ENCODE measurements at regions of chr2 and their contacts with region 1.

Region 1: DNA sequence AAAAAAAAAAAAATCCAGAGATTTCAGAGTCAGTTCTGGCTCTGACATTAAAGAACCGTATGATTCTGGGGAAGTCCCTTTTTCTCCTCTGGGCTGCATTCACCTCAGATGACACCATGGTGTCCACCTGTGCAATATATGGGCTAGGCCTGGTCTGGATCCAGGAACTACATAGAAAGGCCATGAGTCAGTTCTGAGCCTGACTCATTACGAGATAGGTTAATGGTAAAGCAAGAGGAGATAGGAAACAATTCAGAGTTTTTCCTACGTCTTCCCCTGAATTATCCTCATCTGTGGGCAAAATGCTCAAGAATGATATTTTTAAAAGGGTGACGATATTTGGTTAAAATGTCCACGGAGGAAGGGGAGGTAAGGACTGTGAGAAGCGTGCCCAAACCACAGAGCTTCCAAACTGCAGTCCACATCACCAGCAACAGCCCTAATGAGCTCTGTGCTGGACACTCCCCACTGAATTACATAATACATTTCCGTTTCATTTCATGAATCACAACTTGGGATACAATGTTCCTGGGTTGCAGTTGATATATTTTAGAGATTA is 180.1 kb upstream of the OSR1 start:
- DNase-seq: peak; percentile 99
- H3K4me3 ChIP-seq: peak overlapping the region in 2 of 3 experiments; percentile 19 to 38
- H3K27ac ChIP-seq: peak overlapping the region; percentile 97
- H3K4me1 ChIP-seq: peaks cover 64% of the 10 kb centered on the region
- H3K27me3 ChIP-seq: no peaks in the 10 kb centered on the region
- CTCF ChIP-seq: no peak

Region 2: DNA sequence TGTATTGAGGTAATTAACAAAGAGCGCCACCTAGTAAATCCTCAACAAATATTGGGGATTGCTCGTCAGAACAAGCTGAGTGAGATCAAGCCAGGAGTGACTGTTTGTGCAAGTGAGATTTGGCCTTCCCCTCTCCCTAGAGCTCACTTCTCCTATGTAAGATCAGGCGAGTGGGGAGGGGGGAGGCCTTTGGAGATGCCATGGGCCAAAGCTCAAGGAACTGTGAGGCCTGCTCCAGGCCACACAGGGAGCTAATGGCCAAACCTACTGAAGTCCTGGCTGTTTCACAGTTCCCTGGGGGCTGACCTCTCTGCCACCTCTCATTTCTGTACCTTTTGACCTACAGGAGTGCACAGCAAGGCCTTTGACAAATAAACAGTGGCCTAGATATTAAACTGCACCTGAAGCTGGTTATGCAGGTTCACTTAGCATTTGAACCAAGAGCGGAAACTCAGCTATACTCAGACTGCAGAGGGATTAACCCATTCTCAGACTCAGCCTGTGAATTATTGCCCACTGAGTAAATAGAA is 714.2 kb before region 1 on chr2:
- CTCF ChIA-PET with region 1: no interaction called
- dilution Hi-C with region 1: no loop called
- in situ Hi-C with region 1: no loop called
- intact Hi-C with region 1: no loop called
- DNase-seq: no peak
- H3K4me3 ChIP-seq: no peak overlapping the region
- H3K27ac ChIP-seq: no peak overlapping the region
- H3K4me1 ChIP-seq: peaks cover 3% of the 10 kb centered on the region
- H3K27me3 ChIP-seq: no peaks in the 10 kb centered on the region
- CTCF ChIP-seq: no peak

Region 3: GRCh38 chr2:19369341-19369955 is 169.0 kb before region 1 on chr2:
- CTCF ChIA-PET with region 1: no interaction called
- dilution Hi-C with region 1: no loop called
- in situ Hi-C with region 1: no loop called
- intact Hi-C with region 1: loop called (anchors 5 kb)
- DNase-seq: peak; percentile 51
- H3K4me3 ChIP-seq: no peak overlapping the region
- H3K27ac ChIP-seq: no peak overlapping the region
- H3K4me1 ChIP-seq: no peaks in the 10 kb centered on the region
- H3K27me3 ChIP-seq: no peaks in the 10 kb centered on the region
- CTCF ChIP-seq: peak; percentile 82 to 84

Region 4: DNA sequence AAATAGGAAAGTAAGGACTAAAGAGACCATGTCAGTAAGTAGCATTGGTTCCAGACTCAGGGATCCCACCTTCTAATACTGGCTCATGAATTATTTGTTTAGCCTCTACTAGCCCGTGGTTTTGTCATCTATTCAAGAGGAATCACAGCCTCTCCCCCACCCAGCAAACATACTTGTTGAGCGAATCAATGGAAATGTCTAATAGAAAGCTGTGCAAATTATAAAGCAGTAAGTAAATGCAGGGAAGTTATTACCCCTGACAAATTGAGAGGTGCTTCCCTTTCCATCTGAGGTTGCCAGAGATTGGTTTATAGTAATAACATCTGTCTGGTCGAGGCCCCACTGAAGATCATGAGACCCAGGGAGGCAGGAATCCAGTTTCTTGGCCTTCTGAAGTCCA is 39.2 kb after region 1 on chr2:
- CTCF ChIA-PET with region 1: no interaction called
- dilution Hi-C with region 1: no loop called
- in situ Hi-C with region 1: no loop called
- intact Hi-C with region 1: loop called (anchors 1 kb)
- DNase-seq: peak; percentile 49
- H3K4me3 ChIP-seq: no peak overlapping the region
- H3K27ac ChIP-seq: no peak overlapping the region
- H3K4me1 ChIP-seq: peaks cover 37% of the 10 kb centered on the region
- H3K27me3 ChIP-seq: no peaks in the 10 kb centered on the region
- CTCF ChIP-seq: no peak

Region 5: GRCh38 chr2:19623488-19623887 is 85.0 kb after region 1 on chr2:
- CTCF ChIA-PET with region 1: no interaction called
- dilution Hi-C with region 1: no loop called
- in situ Hi-C with region 1: no loop called
- intact Hi-C with region 1: loop called (anchors 2 kb)
- DNase-seq: peak; percentile 90
- H3K4me3 ChIP-seq: no peak overlapping the region
- H3K27ac ChIP-seq: peak overlapping the region; percentile 60
- H3K4me1 ChIP-seq: peaks cover 9% of the 10 kb centered on the region
- H3K27me3 ChIP-seq: no peaks in the 10 kb centered on the region
- CTCF ChIP-seq: no peak

Region 6: GRCh38 chr2:19667085-19667484 is 128.6 kb after region 1 on chr2:
- CTCF ChIA-PET with region 1: no interaction called
- dilution Hi-C with region 1: no loop called
- in situ Hi-C with region 1: no loop called
- intact Hi-C with region 1: loop called (anchors 5 kb)
- DNase-seq: peak; percentile 54
- H3K4me3 ChIP-seq: no peak overlapping the region
- H3K27ac ChIP-seq: no peak overlapping the region
- H3K4me1 ChIP-seq: peaks cover 16% of the 10 kb centered on the region
- H3K27me3 ChIP-seq: no peaks in the 10 kb centered on the region
- CTCF ChIP-seq: peak; percentile 28 to 63